PC-3 (cell line): ENCODE measurements at regions of chr16 and their contacts with region 1.

Region 1: DNA sequence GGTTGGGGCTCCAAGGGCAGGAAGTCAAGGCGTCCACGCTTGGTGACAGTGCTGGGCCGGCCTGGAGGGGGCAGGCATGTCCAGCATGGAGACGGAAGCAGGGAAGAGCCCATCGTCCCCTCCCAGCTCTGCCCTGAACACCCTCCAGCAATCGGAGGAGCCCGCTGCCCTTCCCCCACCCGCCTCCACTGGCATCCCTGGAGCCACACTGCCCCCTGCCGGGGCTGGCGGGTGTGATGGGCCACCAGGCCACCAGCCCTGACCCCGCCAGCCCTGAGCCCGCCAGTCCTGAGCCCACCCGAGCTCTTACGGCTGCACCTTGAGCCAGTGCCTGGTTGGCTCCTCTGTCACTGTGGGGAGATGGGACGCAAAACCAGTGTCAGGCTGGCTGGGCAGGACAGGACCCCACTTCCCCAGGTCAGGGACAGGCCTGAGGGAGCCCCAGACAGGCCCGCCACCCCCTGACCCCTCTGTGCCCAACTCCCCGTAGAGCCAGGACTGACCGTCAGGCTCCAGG is 4.1 kb upstream of the CDH15 start:
- DNase-seq: peak; percentile 78
- ATAC-seq: peak; percentile 14
- H3K4me3 ChIP-seq: no peak overlapping the region
- H3K27ac ChIP-seq: no peak overlapping the region
- H3K4me1 ChIP-seq: peaks cover 9% of the 10 kb centered on the region; the same call in 1 of the 2 replicates
- H3K27me3 ChIP-seq: no peaks in the 10 kb centered on the region
- CTCF ChIP-seq: peak; percentile 73

Region 2: GRCh38 chr16:88811769-88812512 is 355.5 kb before region 1 on chr16 and contains the start of gene APRT:
- CTCF ChIA-PET with region 1: no interaction called
- POLR2A ChIA-PET with region 1: no interaction called
- intact Hi-C with region 1: loop called (anchors 10 kb)
- DNase-seq: peak; percentile 88
- ATAC-seq: peak; percentile 64
- H3K4me3 ChIP-seq: peak within 1 kb of the TSS; percentile 76
- H3K27ac ChIP-seq: peak within 1 kb of the TSS; percentile 73
- H3K4me1 ChIP-seq: peaks cover 10% of the 10 kb centered on the region
- H3K27me3 ChIP-seq: no peaks in the 10 kb centered on the region
- CTCF ChIP-seq: no peak; the same call in 1 of the 2 replicates
- total RNA-seq, gene APRT: 346 and 350 TPM in 2 replicates

Region 3: DNA sequence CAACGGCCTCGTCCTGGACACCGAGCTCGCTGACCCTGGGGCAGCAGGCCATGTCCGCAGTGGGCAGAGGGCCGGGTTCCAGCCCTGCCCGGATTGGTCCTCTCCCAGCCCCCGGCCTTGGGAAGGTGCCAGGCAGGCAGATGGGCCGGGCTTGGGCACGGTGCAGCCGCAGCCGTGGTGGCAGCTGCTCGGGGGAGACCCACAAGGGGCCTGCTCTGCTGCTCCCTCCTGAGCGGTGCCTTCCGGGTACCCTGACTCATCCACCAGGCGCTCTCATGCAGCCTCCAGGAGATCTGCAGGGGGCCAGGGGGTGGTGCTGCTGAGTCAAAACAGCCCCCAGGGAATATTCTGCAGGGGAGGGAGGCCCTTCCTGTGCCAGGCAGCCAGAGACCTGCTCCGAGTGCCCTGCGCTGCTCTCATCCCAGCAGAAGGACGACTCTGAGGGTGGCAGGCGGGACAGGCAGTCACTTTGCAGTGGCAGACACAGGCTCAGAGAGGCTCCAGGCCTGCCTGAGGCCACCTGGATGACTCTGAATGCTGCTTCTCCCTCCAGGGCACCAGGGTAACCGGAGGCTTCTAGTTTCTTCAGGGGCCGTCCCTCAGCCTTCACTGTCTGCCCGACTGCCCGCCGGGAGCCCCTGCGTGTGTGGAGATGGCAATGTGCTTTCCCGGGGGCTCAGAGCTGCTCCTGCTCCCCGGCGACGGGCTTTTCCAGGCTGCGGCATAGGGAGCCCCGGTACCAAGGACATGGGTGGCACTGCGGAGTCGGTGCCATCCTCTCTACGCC is 242.2 kb before region 1 on chr16:
- CTCF ChIA-PET with region 1: no interaction called
- POLR2A ChIA-PET with region 1: no interaction called
- intact Hi-C with region 1: loop called (anchors 5 kb)
- DNase-seq: peak; percentile 80
- ATAC-seq: peak; percentile 80
- H3K4me3 ChIP-seq: no peak overlapping the region
- H3K27ac ChIP-seq: no peak overlapping the region
- H3K4me1 ChIP-seq: peaks cover 29% of the 10 kb centered on the region
- H3K27me3 ChIP-seq: no peaks in the 10 kb centered on the region
- CTCF ChIP-seq: peak; percentile 50

Region 4: GRCh38 chr16:88941913-88942909 is 225.3 kb before region 1 on chr16:
- CTCF ChIA-PET with region 1: no interaction called
- POLR2A ChIA-PET with region 1: no interaction called
- intact Hi-C with region 1: loop called (anchors 5 kb)
- DNase-seq: no peak
- ATAC-seq: peak; percentile 50
- H3K4me3 ChIP-seq: no peak overlapping the region
- H3K27ac ChIP-seq: no peak overlapping the region
- H3K4me1 ChIP-seq: no peaks in the 10 kb centered on the region
- H3K27me3 ChIP-seq: peaks cover 26% of the 10 kb centered on the region
- CTCF ChIP-seq: peak; percentile 48

Region 5: DNA sequence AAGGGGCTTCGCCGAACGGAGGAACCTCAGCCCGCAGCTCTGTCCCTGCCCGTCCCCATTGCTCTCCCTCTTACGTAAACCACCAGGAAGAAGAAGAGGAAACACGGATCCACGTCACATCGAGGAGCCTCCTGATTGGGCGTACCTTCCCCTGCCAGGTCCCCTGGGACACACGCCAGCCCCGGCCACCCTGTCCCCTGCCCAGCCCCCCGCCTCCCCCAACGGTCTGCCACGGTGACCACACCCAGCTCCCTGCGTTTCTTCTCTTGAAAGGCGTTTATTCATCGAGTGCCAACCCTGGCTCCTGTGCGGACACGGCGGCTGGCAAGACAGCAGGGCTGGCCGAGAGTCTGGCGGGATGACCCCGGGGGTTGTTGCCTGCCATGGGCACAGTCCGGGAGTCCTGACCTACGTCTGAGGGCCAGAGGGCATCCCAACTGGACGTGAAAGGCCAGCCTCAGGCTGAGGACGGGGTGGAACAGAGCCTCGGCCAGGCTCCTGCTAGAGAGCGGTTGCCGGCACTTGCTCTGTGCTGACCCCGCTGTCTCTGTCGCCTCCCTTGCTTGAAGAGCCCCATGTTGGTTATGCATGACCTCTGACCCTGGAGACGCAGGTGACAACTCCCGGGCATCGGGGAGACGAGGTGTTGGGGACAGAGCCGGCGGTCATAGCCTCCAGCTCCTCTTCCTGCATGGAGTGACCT is 114.4 kb before region 1 on chr16:
- CTCF ChIA-PET with region 1: no interaction called
- POLR2A ChIA-PET with region 1: no interaction called
- intact Hi-C with region 1: loop called (anchors 10 kb)
- DNase-seq: peak; percentile 82
- ATAC-seq: peak; percentile 80
- H3K4me3 ChIP-seq: peak overlapping the region; percentile 84
- H3K27ac ChIP-seq: peak overlapping the region; percentile 70
- H3K4me1 ChIP-seq: peaks cover 15% of the 10 kb centered on the region; the same call in 1 of the 2 replicates
- H3K27me3 ChIP-seq: no peaks in the 10 kb centered on the region
- CTCF ChIP-seq: no peak; the same call in 1 of the 2 replicates

Region 6: GRCh38 chr16:89490387-89491237 is 323.1 kb after region 1 on chr16 and contains the start of gene ANKRD11:
- CTCF ChIA-PET with region 1: no interaction called
- POLR2A ChIA-PET with region 1: no interaction called
- intact Hi-C with region 1: no loop called
- DNase-seq: peak; percentile 98
- ATAC-seq: peak; percentile 96
- H3K4me3 ChIP-seq: peak within 1 kb of the TSS; percentile 94
- H3K27ac ChIP-seq: peak within 1 kb of the TSS; percentile 40
- H3K4me1 ChIP-seq: peaks cover 21% of the 10 kb centered on the region
- H3K27me3 ChIP-seq: no peaks in the 10 kb centered on the region
- CTCF ChIP-seq: no peak
- total RNA-seq, gene ANKRD11: 65.0 and 92.6 TPM in 2 replicates